CD8-positive, alpha-beta memory T cell (primary cell): ENCODE measurements at regions of chr1 and their contacts with region 1.

Region 1: GRCh38 chr1:151198255-151199127 is at the start of gene PIP5K1A:
- DNase-seq: peak; percentile 96 to 99 (median 99)
- H3K4me3 ChIP-seq: peak within 1 kb of the TSS; percentile 89
- H3K4me3 Mint-ChIP-seq: peak within 1 kb of the TSS; percentile 95 to 100 (median 98)
- H3K27ac ChIP-seq: peak within 1 kb of the TSS; percentile 85
- H3K27ac Mint-ChIP-seq: peak within 1 kb of the TSS; percentile 91 to 99 (median 96)
- H3K4me1 ChIP-seq: peaks cover 18% of the 10 kb centered on the region
- H3K4me1 Mint-ChIP-seq: peaks cover 36 to 51% (median 44%) of the 10 kb centered on the region in 3 donors
- H3K27me3 ChIP-seq: no peaks in the 10 kb centered on the region
- H3K27me3 Mint-ChIP-seq: peaks cover 5 to 8% of the 10 kb centered on the region in 2 donors
- total RNA-seq, gene PIP5K1A: 76.7 to 77.0 TPM

Region 2: GRCh38 chr1:151156515-151156819 is 42.0 kb before region 1 on chr1 and contains the start of gene TNFAIP8L2:
- CTCF ChIA-PET with region 1: no interaction called
- POLR2A ChIA-PET with region 1: no interaction called
- DNase-seq: peak; percentile 51 to 78 (median 65)
- H3K4me3 ChIP-seq: peak within 1 kb of the TSS; percentile 87
- H3K4me3 Mint-ChIP-seq: peak within 1 kb of the TSS; percentile 97 to 100 (median 99)
- H3K27ac ChIP-seq: peak within 1 kb of the TSS; percentile 49
- H3K27ac Mint-ChIP-seq: peak within 1 kb of the TSS; percentile 82 to 98 (median 95)
- H3K4me1 ChIP-seq: peaks cover 39% of the 10 kb centered on the region
- H3K4me1 Mint-ChIP-seq: peaks cover 42 to 59% (median 52%) of the 10 kb centered on the region in 3 donors
- H3K27me3 ChIP-seq: no peaks in the 10 kb centered on the region
- H3K27me3 Mint-ChIP-seq: no peaks in the 10 kb centered on the region
- total RNA-seq, gene TNFAIP8L2: 24.6 to 25.5 TPM

Region 3: GRCh38 chr1:151211972-151212705 is 13.6 kb after region 1 on chr1:
- CTCF ChIA-PET with region 1: no interaction called
- POLR2A ChIA-PET with region 1: no interaction called
- DNase-seq: no peak
- H3K4me3 ChIP-seq: no peak overlapping the region
- H3K4me3 Mint-ChIP-seq: peak overlapping the region in 4 of 7 donors; percentile 1 to 55 (median 26)
- H3K27ac ChIP-seq: no peak overlapping the region
- H3K27ac Mint-ChIP-seq: peak overlapping the region in 5 of 8 donors; percentile 43 to 83 (median 65)
- H3K4me1 ChIP-seq: no peaks in the 10 kb centered on the region
- H3K4me1 Mint-ChIP-seq: peaks cover 26 to 34% (median 27%) of the 10 kb centered on the region in 3 donors
- H3K27me3 ChIP-seq: no peaks in the 10 kb centered on the region
- H3K27me3 Mint-ChIP-seq: no peaks in the 10 kb centered on the region

Region 4: DNA sequence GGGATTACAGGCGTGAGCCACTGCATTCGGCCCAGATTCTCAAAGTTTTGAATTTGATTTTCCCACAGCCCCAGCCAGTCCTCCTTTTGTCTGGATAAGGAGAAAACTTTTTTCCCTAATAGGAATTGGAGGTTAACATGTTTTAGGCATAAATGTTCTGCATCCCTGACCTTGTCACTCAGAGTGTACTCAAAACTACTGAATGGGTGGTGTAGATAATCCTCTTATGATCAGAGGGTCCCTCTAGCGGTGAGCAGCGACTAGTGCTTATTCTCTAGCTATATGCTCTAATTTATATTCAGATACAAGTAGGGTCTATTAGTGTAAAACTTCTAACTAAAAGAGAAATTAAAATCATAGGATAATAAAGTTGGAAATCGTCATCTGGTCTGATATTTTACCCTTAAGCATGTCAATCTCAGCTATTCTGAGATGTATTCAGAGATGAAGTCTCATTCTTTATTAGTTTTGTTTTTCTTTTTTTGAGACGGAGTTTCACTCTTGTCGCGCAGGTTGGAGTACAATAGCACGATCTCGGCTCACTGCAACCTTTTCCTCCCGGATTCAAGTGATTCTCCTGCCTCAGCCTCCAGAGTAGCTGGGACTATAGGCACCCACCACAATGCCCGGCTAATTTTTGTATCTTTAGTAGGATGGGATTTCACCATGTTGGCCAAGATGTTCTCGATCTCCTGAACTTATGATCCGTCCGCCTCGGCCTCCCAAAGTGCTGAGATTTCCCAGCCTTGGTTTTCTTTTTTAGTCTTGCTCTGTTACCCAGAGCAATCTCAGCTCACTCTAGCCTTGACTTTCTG is 53.4 kb after region 1 on chr1:
- CTCF ChIA-PET with region 1: interaction called, 13 read pairs
- POLR2A ChIA-PET with region 1: interaction called, 3 read pairs
- DNase-seq: peak; percentile 29 to 72 (median 55)
- H3K4me3 ChIP-seq: no peak overlapping the region
- H3K4me3 Mint-ChIP-seq: peak overlapping the region in 2 of 7 donors; percentile 21 to 66
- H3K27ac ChIP-seq: no peak overlapping the region
- H3K27ac Mint-ChIP-seq: peak overlapping the region in 2 of 8 donors; percentile 70 to 79
- H3K4me1 ChIP-seq: peaks cover 11% of the 10 kb centered on the region
- H3K4me1 Mint-ChIP-seq: peaks cover 21 to 25% (median 22%) of the 10 kb centered on the region in 3 donors
- H3K27me3 ChIP-seq: no peaks in the 10 kb centered on the region
- H3K27me3 Mint-ChIP-seq: peaks cover 0 to 2% of the 10 kb centered on the region in 2 donors